ENCODE measurements at regions of chr19 and their contacts with region 1.

Region 1: GRCh38 chr19:37389234-37389633 is 18.3 kb downstream of the ZNF527 start:
- DNase-seq: no peak
- H3K4me3 ChIP-seq: no peak overlapping the region
- H3K27ac ChIP-seq: no peak overlapping the region
- H3K4me1 ChIP-seq: no peaks in the 10 kb centered on the region
- H3K27me3 ChIP-seq: no peaks in the 10 kb centered on the region
- CTCF ChIP-seq: no peak
- POLR2A ChIP-seq: no peak

Region 2: GRCh38 chr19:36837906-36838783 is 551.1 kb before region 1 on chr19 and contains the start of gene ZNF790:
- intact Hi-C with region 1: loop called (anchors 5 kb)
- DNase-seq: peak; percentile 77 to 82
- H3K4me3 ChIP-seq: peak within 1 kb of the TSS; percentile 62 to 88 (median 76)
- H3K27ac ChIP-seq: peak within 1 kb of the TSS; percentile 81 to 93
- H3K4me1 ChIP-seq: no peaks in the 10 kb centered on the region
- H3K27me3 ChIP-seq: no peaks in the 10 kb centered on the region
- CTCF ChIP-seq: no peak
- POLR2A ChIP-seq: no peak
- total RNA-seq, gene ZNF790: 5.6 to 11.4 (median 8.8) TPM